ENCODE measurements at regions of chr16 and their contacts with region 1.

Region 1: DNA sequence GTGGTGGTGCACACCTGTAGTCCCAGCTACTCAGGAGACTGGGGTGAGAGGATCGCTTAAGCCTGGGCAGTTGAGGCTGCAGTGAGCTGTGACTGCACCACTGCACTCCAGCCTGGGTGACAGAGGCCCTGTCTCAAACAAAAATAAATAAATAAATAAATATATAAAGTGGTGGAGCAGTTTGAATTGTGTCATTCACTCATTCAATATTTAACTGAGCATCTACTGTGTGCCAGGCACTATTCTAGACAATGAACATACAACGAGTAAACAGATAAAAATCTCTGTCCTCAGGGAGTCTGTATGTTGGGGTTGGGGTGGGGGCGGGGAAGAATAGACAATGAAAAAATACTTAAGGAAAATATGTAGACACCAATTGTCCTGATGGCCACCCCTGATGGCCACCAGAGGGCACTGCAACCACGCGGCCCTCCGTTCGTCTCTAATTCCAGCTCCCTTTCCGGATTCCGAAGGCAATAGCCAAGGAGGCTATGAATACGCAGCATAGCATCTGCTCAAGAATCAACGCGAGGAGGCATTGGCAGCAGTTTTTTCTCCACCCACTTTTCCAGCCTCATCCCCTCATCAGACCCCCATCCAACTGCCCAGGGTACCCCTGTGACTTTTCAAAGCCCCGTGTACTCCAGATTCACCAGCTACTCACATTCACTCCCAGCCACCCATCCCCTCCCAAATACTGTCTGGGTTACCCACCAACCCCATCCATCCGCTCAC is 21.4 kb downstream of the QPRT start:
- DNase-seq: peak; percentile 70 to 81
- ATAC-seq: peak; percentile 90

Region 2: GRCh38 chr16:29848420-29849297 is 148.2 kb after region 1 on chr16:
- intact Hi-C with region 1: loop called in 1 of 2 experiments (anchors 10 kb)
- DNase-seq: peak; percentile 72 to 85
- ATAC-seq: peak; percentile 84

Region 3: GRCh38 chr16:30028438-30029076 is 328.1 kb after region 1 on chr16:
- intact Hi-C with region 1: loop called in 1 of 2 experiments (anchors 5 kb)
- DNase-seq: no peak
- ATAC-seq: peak; percentile 32

Region 4: GRCh38 chr16:30131869-30132475 is 431.6 kb after region 1 on chr16:
- intact Hi-C with region 1: no loop called
- DNase-seq: no peak
- ATAC-seq: no peak

Measured in left colon (tissue), 2 donors.